Heart right ventricle (tissue), 16 donors: ENCODE measurements at regions of chr17 and their contacts with region 1.

Region 1: DNA sequence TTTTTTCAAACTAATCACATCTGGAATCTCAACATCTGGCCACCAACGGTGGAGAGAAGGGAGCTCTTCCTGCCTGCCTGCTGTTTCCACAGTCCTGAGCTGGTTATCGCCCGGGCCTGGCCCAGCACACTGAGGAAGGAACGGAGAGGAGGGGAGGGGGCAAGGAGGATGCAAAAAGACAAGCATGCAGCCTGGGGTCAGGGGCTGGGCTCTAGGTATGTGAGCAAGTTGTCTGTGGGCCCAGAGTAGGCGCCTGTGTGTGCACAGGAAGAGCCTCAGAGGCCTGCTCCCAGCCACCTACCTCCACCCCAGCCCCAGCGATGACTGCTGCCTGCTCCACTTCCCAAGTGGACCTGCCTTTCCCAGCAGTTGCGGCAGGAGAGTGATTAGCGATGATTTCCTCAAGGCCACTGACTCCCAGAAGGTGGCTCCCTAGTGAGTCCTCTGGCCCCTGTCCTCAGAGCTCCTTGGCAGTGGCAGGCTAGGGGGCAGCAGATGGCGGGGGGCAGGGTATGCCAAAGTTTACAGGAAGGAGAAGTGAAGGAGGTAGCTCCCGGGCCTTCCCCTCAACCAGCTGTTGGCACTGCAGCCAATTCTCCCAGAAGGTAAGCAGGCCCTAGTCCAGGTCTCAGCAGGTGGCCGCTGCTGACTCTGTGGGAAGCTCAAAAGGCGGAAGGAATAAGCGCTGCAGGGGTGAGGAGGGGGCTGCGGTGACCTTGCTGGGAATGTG is 27.0 kb upstream of the RASD1 start:
- DNase-seq: peak in 1 of 2 donors; percentile 6
- ATAC-seq: no peak
- H3K4me3 ChIP-seq: no peak overlapping the region
- H3K27ac ChIP-seq: no peak overlapping the region
- H3K4me1 ChIP-seq: peaks cover 0 to 30% (median 17%) of the 10 kb centered on the region in 9 donors
- H3K27me3 ChIP-seq: no peaks in the 10 kb centered on the region
- CTCF ChIP-seq: no peak

Region 2: DNA sequence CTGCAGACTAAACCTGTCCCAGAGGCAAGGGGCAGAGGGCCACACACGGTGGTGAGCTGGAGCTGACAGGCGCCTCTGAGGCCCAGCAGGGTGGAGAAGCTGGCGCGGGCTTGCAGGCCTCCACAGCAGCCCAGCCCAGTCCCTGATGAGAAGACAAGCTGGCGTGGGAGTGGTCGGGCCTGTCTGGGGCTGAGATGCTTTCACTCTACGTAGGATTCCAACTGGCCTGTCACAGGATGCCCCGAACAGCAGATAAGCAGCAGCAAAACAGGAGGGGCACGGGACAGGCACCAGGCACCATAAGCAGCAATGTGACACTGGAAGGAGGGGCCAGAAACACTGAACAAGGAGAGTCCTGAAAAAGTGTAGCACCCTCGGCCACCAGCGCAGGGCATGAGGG is 28.2 kb after region 1 on chr17:
- intact Hi-C with region 1: loop called in 2 of 10 experiments (anchors 2 to 5 kb)
- DNase-seq: peak; percentile 71 to 72
- ATAC-seq: peak; percentile 73 to 88 (median 82)
- H3K4me3 ChIP-seq: no peak overlapping the region
- H3K27ac ChIP-seq: peak overlapping the region; percentile 56 to 88 (median 80)
- H3K4me1 ChIP-seq: peaks cover 0 to 65% (median 48%) of the 10 kb centered on the region in 9 donors
- H3K27me3 ChIP-seq: no peaks in the 10 kb centered on the region
- CTCF ChIP-seq: no peak

Region 3: DNA sequence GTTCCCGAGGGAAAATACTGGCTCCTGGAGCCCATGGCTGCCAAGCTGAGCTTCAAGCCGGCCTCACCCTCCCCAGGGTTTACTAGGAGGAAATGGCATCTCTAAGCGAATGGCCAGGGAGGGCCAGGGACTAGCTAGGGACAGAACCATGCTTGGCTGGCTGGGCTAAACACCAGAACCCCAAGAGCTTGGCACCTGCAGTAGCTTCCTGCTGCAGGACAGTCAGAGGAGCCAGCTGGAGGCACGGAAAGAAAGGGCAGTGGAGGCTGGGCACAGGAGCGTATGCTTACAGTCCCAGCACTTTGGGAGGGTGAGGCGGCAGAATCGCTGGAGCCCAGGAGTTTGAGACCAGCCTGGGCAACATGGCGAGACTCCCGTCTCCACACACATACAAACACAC is 34.6 kb after region 1 on chr17:
- intact Hi-C with region 1: loop called in 1 of 10 experiments (anchors 5 kb)
- DNase-seq: peak in 1 of 2 donors; percentile 38
- ATAC-seq: peak in 7 of 8 donors; percentile 22 to 76 (median 57)
- H3K4me3 ChIP-seq: no peak overlapping the region
- H3K27ac ChIP-seq: peak overlapping the region in 2 of 10 donors; percentile 16 to 28
- H3K4me1 ChIP-seq: peaks cover 0 to 29% (median 10%) of the 10 kb centered on the region in 9 donors
- H3K27me3 ChIP-seq: no peaks in the 10 kb centered on the region
- CTCF ChIP-seq: no peak

Region 4: GRCh38 chr17:17575360-17576251 is 52.4 kb after region 1 on chr17:
- intact Hi-C with region 1: no loop called
- DNase-seq: no peak
- ATAC-seq: no peak
- H3K4me3 ChIP-seq: no peak overlapping the region
- H3K27ac ChIP-seq: no peak overlapping the region
- H3K4me1 ChIP-seq: peaks cover under 1 to 31% (median 5%) of the 10 kb centered on the region in 9 donors
- H3K27me3 ChIP-seq: no peaks in the 10 kb centered on the region
- CTCF ChIP-seq: no peak